ENCODE measurements at regions of chr6 and their contacts with region 1.

Region 1: DNA sequence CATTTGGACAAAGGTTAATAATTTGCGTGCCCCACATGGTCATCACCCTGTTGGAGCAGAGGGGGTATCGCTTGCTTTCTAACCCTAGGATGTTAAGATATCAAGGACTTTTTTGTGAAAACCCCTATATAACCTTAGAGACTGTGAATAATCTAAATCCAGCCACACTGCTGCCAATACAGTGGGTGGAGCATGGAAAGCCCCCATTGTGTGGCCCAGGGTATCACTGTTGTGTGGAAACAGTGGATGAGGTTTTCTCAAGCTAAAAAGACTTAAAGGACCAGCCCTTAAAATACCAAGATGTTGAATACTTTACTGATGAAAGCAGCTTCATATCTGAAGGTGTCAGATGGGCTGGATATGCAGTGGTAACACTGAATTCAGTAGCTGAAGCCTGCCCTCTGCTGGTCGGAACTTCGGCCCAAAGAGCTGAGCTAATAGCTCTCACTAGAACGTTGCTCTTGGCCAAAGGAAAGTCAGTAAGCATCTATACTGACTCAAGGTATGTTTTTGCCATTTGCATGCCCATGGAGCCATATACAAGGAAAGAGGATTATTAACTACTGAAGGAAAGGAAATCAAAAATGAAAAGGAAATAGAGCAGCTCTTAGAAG is 695.2 kb downstream of the PHF3 start:
- DNase-seq: peak; percentile 70
- ATAC-seq: no peak
- H3K4me3 Mint-ChIP-seq: no peak overlapping the region
- H3K27ac Mint-ChIP-seq: no peak overlapping the region
- H3K4me1 Mint-ChIP-seq: no peaks in the 10 kb centered on the region
- H3K27me3 Mint-ChIP-seq: no peaks in the 10 kb centered on the region

Region 2: GRCh38 chr6:63923139-63923739 is 407.6 kb before region 1 on chr6:
- CTCF ChIA-PET with region 1: no interaction called
- POLR2A ChIA-PET with region 1: no interaction called
- intact Hi-C with region 1: loop called (anchors 1 kb)
- DNase-seq: no peak
- ATAC-seq: no peak
- H3K4me3 Mint-ChIP-seq: no peak overlapping the region
- H3K27ac Mint-ChIP-seq: no peak overlapping the region
- H3K4me1 Mint-ChIP-seq: no peaks in the 10 kb centered on the region
- H3K27me3 Mint-ChIP-seq: no peaks in the 10 kb centered on the region

Measured in activated CD4-positive, alpha-beta T cell treated with anti-CD3 and anti-CD28 coated beads for 36 hours (primary cell).